Calu3 (cell line): ENCODE measurements at regions of chr6 and their contacts with region 1.

Region 1: GRCh38 chr6:41683510-41684310 is 45.4 kb downstream of the MDFI start:
- DNase-seq: peak; percentile 88
- H3K4me3 Mint-ChIP-seq: peak overlapping the region; percentile 68
- H3K27ac Mint-ChIP-seq: no peak overlapping the region
- H3K4me1 Mint-ChIP-seq: no peaks in the 10 kb centered on the region
- H3K27me3 Mint-ChIP-seq: no peaks in the 10 kb centered on the region
- CTCF ChIP-seq: peak; percentile 94

Region 2: DNA sequence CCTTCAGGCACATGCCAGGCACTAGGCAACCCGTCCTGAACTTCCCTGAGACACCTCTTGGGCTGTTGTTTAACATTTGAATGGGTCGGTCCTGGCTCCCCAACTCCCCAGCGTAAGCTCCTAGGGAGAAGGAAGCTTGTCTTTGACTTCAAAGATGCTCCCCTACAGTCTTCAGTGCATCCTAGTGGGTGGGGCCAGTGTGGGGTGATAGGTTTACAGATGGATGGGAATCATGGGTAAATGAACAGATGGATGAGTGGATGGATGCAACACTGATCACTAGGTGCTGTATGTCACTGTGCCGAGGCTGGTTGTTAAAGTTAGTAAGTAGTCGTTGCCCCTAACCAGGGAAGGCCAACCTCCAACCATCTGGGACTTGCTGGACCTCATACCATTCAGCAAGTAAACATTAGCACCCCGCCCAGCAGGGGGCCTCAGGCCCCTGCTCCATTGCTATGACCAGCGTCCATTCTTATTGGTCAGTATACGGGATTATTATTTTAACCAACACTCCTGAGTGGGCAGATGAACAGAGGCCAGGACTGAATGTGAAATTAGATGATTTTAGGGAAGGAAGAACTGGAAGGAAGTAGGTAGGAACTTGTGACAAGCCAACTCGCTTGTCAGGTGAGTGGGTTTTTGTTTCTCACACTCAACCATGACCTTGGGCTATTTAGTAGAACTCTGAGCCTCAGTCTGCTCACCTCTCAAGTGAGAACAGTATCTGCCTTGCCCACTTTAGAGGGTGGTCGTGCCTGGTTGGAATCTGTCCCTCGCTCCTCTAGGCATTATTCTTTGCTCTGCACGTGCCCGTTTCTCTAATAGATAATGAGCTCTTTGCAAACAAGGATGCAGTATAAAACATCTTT is 220.4 kb before region 1 on chr6:
- CTCF ChIA-PET with region 1: interaction called, 5 read pairs
- intact Hi-C with region 1: loop called (anchors 1 kb)
- DNase-seq: peak; percentile 83
- H3K4me3 Mint-ChIP-seq: no peak overlapping the region
- H3K27ac Mint-ChIP-seq: peak overlapping the region; percentile 0
- H3K4me1 Mint-ChIP-seq: peaks cover 8% of the 10 kb centered on the region
- H3K27me3 Mint-ChIP-seq: peaks cover 76% of the 10 kb centered on the region
- CTCF ChIP-seq: peak; percentile 77

Region 3: DNA sequence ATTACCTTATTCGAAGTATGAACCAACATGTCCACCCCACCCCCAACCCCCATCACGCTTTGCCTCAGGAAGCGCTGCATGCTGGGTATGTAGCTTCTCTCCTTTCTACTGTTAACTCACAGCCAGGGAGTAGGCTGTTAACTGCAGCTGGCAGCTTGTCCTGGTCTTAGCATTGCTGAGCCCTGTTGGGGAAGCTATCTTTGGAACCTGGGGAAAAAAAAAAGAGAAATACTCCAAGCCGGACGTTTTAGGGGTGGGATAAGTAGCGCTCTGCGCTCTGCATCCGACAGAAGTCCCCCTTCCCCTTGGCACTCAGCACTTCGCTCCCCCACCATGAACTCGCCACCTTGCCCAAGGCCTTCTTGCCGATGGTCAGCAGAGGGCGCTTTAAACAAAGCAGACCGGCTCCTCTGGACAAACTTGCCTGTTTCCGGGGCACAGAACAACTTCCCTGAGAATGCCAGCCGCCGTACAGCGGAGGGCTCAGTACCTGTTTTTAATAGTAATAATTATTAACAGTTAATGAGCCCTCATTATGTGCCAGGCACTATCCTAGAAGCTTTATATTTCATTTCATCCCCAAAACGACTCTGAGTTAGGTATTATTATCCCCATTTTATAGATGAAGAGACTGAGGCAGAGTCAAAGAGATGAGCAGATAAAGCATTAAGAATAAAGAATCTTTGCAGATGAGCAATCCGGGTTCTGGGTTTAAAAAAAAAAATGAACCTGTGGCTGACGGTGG is 80.7 kb before region 1 on chr6:
- CTCF ChIA-PET with region 1: interaction called, 18 read pairs
- intact Hi-C with region 1: loop called (anchors 1 kb)
- DNase-seq: peak; percentile 90
- H3K4me3 Mint-ChIP-seq: no peak overlapping the region
- H3K27ac Mint-ChIP-seq: no peak overlapping the region
- H3K4me1 Mint-ChIP-seq: peaks cover 8% of the 10 kb centered on the region
- H3K27me3 Mint-ChIP-seq: peaks cover 21% of the 10 kb centered on the region
- CTCF ChIP-seq: peak; percentile 88

Region 4: DNA sequence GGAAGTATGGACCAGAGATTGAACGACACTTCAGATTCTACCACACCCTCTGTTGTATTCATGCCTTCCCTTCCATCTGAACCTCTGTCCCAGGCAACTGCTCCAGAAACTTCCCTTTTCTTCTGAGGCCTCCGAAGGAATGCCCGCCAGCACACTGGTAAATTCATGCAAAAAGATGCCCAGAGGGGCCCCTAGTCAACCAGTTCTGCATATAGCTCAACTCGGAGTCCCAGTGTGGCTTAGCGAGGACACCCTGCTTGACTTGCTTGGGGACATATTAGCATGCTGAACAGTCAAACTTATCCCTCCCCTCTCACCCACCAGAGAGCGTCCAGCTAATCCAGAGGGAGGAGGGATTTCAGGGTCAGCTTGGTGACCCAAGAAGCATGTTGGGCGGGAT is 68.5 kb before region 1 on chr6:
- CTCF ChIA-PET with region 1: interaction called, 15 read pairs
- intact Hi-C with region 1: no loop called
- DNase-seq: no peak
- H3K4me3 Mint-ChIP-seq: no peak overlapping the region
- H3K27ac Mint-ChIP-seq: no peak overlapping the region
- H3K4me1 Mint-ChIP-seq: peaks cover 8% of the 10 kb centered on the region
- H3K27me3 Mint-ChIP-seq: peaks cover 55% of the 10 kb centered on the region
- CTCF ChIP-seq: no peak

Region 5: GRCh38 chr6:42239351-42240055 is 555.8 kb after region 1 on chr6:
- CTCF ChIA-PET with region 1: no interaction called
- intact Hi-C with region 1: no loop called
- DNase-seq: no peak
- H3K4me3 Mint-ChIP-seq: no peak overlapping the region
- H3K27ac Mint-ChIP-seq: no peak overlapping the region
- H3K4me1 Mint-ChIP-seq: peaks cover 19% of the 10 kb centered on the region
- H3K27me3 Mint-ChIP-seq: no peaks in the 10 kb centered on the region
- CTCF ChIP-seq: no peak